ENCODE measurements at regions of chr2 and their contacts with region 1.

Region 1: GRCh38 chr2:172299737-172300174 is 127.6 kb upstream of the ITGA6 start:
- DNase-seq: no peak
- ATAC-seq: no peak
- H3K4me3 ChIP-seq: no peak overlapping the region
- H3K4me3 Mint-ChIP-seq: no peak overlapping the region
- H3K27ac ChIP-seq: no peak overlapping the region
- H3K27ac Mint-ChIP-seq: no peak overlapping the region
- H3K4me1 ChIP-seq: no peaks in the 10 kb centered on the region
- H3K4me1 Mint-ChIP-seq: no peaks in the 10 kb centered on the region
- H3K27me3 ChIP-seq: peaks cover 0 to 9% of the 10 kb centered on the region in 2 experiments
- H3K27me3 Mint-ChIP-seq: peaks cover 15 to 18% of the 10 kb centered on the region in 2 donors

Region 2: GRCh38 chr2:172340394-172340793 is 40.6 kb after region 1 on chr2:
- CTCF ChIA-PET with region 1: interaction called in 1 of 2 experiments, 14 read pairs
- POLR2A ChIA-PET with region 1: no interaction called
- DNase-seq: no peak
- ATAC-seq: no peak
- H3K4me3 ChIP-seq: peak overlapping the region; percentile 20 to 27
- H3K4me3 Mint-ChIP-seq: peak overlapping the region; percentile 59 to 75 (median 62)
- H3K27ac ChIP-seq: no peak overlapping the region
- H3K27ac Mint-ChIP-seq: peak overlapping the region; percentile 15 to 82
- H3K4me1 ChIP-seq: peaks cover 3 to 8% of the 10 kb centered on the region in 2 experiments
- H3K4me1 Mint-ChIP-seq: peaks cover 23 to 30% (median 29%) of the 10 kb centered on the region in 3 donors
- H3K27me3 ChIP-seq: no peaks in the 10 kb centered on the region
- H3K27me3 Mint-ChIP-seq: no peaks in the 10 kb centered on the region

Measured in T-cell (primary cell).